Endothelial cell of umbilical vein (primary cell): ENCODE measurements at regions of chr14 and their contacts with region 1.

Region 1: GRCh38 chr14:34722717-34723545 is 8.5 kb upstream of the CFL2 start:
- DNase-seq: peak; percentile 78
- H3K4me3 ChIP-seq: no peak overlapping the region
- H3K27ac ChIP-seq: no peak overlapping the region
- H3K4me1 ChIP-seq: no peaks in the 10 kb centered on the region
- H3K27me3 ChIP-seq: no peaks in the 10 kb centered on the region
- CTCF ChIP-seq: peak; percentile 68 to 74
- POLR2A ChIP-seq: no peak

Region 2: GRCh38 chr14:34671716-34672115 is 51.2 kb before region 1 on chr14:
- CTCF ChIA-PET with region 1: interaction called, 100 read pairs
- POLR2A ChIA-PET with region 1: no interaction called
- dilution Hi-C with region 1: no loop called
- intact Hi-C with region 1: loop called (anchors 1 kb)
- DNase-seq: no peak
- H3K4me3 ChIP-seq: no peak overlapping the region
- H3K27ac ChIP-seq: no peak overlapping the region
- H3K4me1 ChIP-seq: peaks cover under 1% of the 10 kb centered on the region
- H3K27me3 ChIP-seq: no peaks in the 10 kb centered on the region
- CTCF ChIP-seq: no peak
- POLR2A ChIP-seq: no peak

Region 3: GRCh38 chr14:34678306-34678705 is 44.6 kb before region 1 on chr14:
- CTCF ChIA-PET with region 1: interaction called, 100 read pairs
- POLR2A ChIA-PET with region 1: no interaction called
- dilution Hi-C with region 1: no loop called
- intact Hi-C with region 1: no loop called
- DNase-seq: no peak
- H3K4me3 ChIP-seq: no peak overlapping the region
- H3K27ac ChIP-seq: peak overlapping the region; percentile 83
- H3K4me1 ChIP-seq: peaks cover 12% of the 10 kb centered on the region
- H3K27me3 ChIP-seq: no peaks in the 10 kb centered on the region
- CTCF ChIP-seq: no peak
- POLR2A ChIP-seq: no peak

Region 4: DNA sequence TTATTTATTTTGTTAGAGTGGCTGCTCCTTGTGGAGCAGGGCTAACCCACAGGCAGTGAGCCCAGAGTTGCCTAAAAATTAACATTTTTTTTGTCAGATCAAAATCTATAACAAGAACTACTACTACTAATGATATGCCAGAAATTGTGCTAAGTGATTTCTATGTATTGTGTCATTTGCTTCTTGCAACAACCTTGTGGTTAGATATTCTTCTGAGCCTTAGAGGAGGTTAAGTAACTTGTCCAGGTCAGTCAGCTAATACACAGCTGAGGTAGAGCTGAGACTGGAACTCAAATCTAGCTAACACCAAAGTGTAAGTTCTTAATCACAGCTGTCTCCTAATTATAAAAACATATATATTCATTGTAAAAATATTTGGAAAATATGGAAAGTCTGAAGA is 38.4 kb before region 1 on chr14:
- CTCF ChIA-PET with region 1: interaction called, 28 read pairs
- POLR2A ChIA-PET with region 1: no interaction called
- dilution Hi-C with region 1: no loop called
- intact Hi-C with region 1: no loop called
- DNase-seq: no peak
- H3K4me3 ChIP-seq: no peak overlapping the region
- H3K27ac ChIP-seq: no peak overlapping the region
- H3K4me1 ChIP-seq: no peaks in the 10 kb centered on the region
- H3K27me3 ChIP-seq: no peaks in the 10 kb centered on the region
- CTCF ChIP-seq: no peak
- POLR2A ChIP-seq: no peak

Region 5: DNA sequence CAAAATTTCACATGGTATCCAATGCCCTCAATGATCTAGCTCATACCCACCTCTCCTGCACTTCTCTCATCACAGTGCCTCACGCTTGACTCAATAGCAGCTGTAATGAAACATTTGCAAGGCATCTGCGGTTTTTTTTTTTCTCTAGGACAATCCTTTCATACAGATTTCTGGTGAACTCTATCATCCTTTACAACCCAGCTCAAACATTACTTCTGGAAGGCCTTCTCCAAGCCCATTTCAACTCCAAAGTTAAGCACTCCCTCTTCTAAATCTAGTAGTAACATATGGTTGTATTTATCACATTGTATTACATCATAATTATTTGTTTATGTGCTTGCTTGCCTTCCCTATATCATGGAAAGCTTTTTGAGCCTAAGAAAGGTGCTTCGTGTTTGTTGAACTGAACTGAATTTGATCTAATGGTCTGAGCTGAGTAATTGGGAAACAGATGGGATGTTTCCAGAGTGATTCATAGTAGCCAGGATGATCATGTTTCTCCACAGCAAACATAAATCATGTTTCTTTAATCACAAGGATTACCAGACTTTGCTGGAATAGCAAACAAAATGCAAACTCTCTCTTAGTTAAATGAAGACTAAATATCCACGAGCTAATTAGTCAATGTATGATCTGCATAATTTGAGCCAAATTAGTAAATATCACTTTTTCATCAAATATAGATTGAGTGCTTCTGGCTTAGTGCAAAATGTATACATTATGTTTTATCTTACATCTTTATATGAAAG is 22.9 kb before region 1 on chr14:
- CTCF ChIA-PET with region 1: interaction called, 40 read pairs
- POLR2A ChIA-PET with region 1: no interaction called
- dilution Hi-C with region 1: no loop called
- intact Hi-C with region 1: loop called (anchors 1 kb)
- DNase-seq: peak; percentile 93
- H3K4me3 ChIP-seq: no peak overlapping the region
- H3K27ac ChIP-seq: peak overlapping the region; percentile 80
- H3K4me1 ChIP-seq: peaks cover 19% of the 10 kb centered on the region
- H3K27me3 ChIP-seq: no peaks in the 10 kb centered on the region
- CTCF ChIP-seq: no peak
- POLR2A ChIP-seq: no peak

Region 6: GRCh38 chr14:34733235-34733634 is 10.3 kb after region 1 on chr14:
- CTCF ChIA-PET with region 1: interaction called, 32 read pairs
- POLR2A ChIA-PET with region 1: no interaction called
- dilution Hi-C with region 1: no loop called
- intact Hi-C with region 1: no loop called
- DNase-seq: no peak
- H3K4me3 ChIP-seq: no peak overlapping the region
- H3K27ac ChIP-seq: no peak overlapping the region
- H3K4me1 ChIP-seq: no peaks in the 10 kb centered on the region
- H3K27me3 ChIP-seq: no peaks in the 10 kb centered on the region
- CTCF ChIP-seq: no peak
- POLR2A ChIP-seq: no peak

Region 7: DNA sequence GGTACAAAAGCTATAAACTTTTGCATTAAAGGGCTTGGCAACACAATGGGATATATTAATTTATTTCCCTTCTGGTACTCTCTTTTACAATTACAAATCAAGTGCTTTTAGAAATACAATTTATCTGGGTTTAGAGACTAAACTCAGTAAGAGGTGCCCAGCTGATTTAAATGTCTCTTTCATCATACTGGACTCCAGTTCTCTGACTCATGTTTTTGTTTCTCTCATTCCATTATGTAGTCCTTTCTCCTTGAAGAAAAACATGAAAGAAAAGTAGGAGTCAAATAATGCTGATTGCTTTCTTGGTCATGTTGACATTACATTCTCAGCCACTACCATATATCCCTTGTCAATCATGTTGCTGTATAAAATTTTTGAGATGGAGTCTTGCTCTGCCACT is 27.7 kb after region 1 on chr14:
- CTCF ChIA-PET with region 1: interaction called, 22 read pairs
- POLR2A ChIA-PET with region 1: no interaction called
- dilution Hi-C with region 1: no loop called
- intact Hi-C with region 1: no loop called
- DNase-seq: peak; percentile 7
- H3K4me3 ChIP-seq: no peak overlapping the region
- H3K27ac ChIP-seq: no peak overlapping the region
- H3K4me1 ChIP-seq: no peaks in the 10 kb centered on the region
- H3K27me3 ChIP-seq: no peaks in the 10 kb centered on the region
- CTCF ChIP-seq: no peak
- POLR2A ChIP-seq: no peak

Region 8: GRCh38 chr14:34951271-34951670 is 228.3 kb after region 1 on chr14:
- CTCF ChIA-PET with region 1: no interaction called
- POLR2A ChIA-PET with region 1: no interaction called
- dilution Hi-C with region 1: no loop called
- intact Hi-C with region 1: no loop called
- DNase-seq: no peak
- H3K4me3 ChIP-seq: no peak overlapping the region
- H3K27ac ChIP-seq: no peak overlapping the region
- H3K4me1 ChIP-seq: no peaks in the 10 kb centered on the region
- H3K27me3 ChIP-seq: no peaks in the 10 kb centered on the region
- CTCF ChIP-seq: no peak
- POLR2A ChIP-seq: no peak